Mammary epithelial cell (primary cell): ENCODE measurements at regions of chr1 and their contacts with region 1.

Region 1: DNA sequence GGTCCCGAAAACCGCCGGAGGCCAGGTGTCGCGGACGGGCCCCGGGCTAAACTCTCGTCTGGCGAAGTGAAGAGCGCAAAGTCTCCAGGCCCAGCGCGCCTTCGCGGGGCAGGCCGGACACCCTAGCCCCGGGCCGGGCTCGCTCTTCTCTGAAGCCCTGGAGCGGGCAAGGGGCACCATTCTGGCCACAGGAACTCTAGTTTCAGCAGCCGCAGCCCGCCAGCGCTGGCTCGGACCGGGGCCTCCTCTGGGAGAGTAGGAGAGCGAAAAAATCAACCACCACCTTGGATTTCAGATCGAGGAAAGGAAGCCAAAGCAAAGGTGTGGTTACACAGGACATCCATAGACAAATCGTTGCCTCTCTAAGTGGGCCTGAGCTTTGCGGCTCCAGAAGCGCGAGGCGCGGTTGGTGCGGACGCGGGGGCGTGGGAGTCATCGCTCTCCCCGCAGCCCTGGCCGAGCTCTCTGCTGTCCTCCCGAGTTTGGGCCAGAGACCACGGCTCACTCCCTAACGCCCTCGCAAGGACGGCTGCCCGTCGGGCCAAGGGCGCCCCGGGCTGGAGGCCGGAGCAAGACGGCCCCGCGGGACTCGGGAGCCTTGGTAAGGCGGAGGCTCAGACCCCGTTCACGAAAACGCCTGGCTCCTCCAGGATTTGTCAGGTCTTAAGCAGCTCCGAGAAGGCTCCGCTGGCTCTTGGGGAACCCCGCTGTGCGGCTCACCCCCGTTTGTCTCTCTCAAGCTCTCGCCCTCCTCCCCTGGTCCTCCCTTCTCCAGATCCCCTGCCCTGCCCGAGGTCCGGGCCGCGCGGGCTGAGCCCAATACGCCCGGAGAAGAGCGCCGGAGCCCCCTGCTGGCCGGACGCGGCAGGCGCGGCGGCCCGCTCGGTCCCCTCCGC is 132.9 kb upstream of the DPYD start:
- DNase-seq: peak; percentile 36
- H3K4me3 ChIP-seq: peak overlapping the region; percentile 53 to 67 (median 55)
- H3K27ac ChIP-seq: no peak overlapping the region
- H3K4me1 ChIP-seq: peaks cover 11% of the 10 kb centered on the region
- H3K27me3 ChIP-seq: no peaks in the 10 kb centered on the region
- CTCF ChIP-seq: peak; percentile 54 to 71

Region 2: DNA sequence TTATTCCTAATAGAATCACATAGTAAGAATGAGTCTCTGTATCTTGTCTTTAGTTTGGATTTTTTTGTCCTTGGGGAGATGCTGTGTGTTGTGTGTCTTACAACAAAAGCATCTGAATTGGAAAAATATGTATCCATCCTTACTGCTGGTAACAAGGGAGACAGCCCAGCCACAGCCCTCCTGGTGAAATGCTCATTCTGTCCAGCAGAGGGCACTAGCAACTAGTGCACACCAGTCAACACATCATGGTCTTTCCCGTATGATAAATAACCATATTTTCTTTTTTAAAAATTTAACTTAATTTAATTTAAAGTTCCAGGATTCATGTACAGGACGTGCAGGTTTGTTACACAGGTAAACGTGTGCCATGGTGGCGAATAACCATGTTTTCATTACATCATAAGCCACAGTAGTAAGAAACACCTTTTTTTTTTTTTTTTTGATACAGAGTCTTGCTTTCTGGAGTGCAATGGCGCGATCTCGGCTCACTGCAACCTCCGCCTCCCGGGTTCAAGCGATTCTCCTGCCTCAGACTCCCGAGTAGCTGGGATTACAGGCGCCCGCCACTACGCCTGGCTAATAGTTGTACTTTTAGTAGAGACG is 1087.1 kb before region 1 on chr1:
- CTCF ChIA-PET with region 1: no interaction called
- dilution Hi-C with region 1: no loop called
- in situ Hi-C with region 1: no loop called
- intact Hi-C with region 1: loop called (anchors 1 kb)
- DNase-seq: peak; percentile 60
- H3K4me3 ChIP-seq: peak overlapping the region; percentile 32 to 45 (median 42)
- H3K27ac ChIP-seq: no peak overlapping the region
- H3K4me1 ChIP-seq: no peaks in the 10 kb centered on the region
- H3K27me3 ChIP-seq: peaks cover 3% of the 10 kb centered on the region
- CTCF ChIP-seq: peak; percentile 95 to 97

Region 3: DNA sequence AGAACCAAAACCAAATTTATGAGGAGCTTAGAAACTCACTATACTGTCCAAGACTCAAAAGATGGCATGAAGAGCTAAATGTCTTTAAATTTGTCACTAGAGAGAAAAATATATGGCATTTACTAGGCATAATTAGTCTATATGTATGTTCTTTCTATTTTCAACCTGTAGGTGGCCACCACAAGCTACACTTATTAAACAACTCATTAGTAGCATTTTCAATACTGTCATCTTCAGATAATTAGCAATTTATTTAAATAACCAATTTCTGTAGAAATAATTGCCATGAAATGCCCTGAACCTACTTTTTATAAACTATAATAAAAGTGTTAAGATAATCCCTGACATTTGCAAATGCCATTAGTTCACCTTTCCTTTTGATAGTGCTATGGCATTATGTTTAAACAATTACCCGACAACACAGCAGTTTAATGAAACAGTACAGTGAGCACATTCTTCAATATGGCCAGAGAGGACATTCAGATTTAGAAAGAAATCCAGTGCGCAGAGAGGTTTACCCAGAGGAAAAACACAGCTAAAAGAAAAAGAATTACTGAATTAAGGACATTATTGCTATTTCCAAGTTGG is 809.7 kb before region 1 on chr1:
- CTCF ChIA-PET with region 1: no interaction called
- dilution Hi-C with region 1: no loop called
- in situ Hi-C with region 1: no loop called
- intact Hi-C with region 1: loop called (anchors 5 kb)
- DNase-seq: peak; percentile 5
- H3K4me3 ChIP-seq: no peak overlapping the region
- H3K27ac ChIP-seq: no peak overlapping the region
- H3K4me1 ChIP-seq: no peaks in the 10 kb centered on the region
- H3K27me3 ChIP-seq: no peaks in the 10 kb centered on the region
- CTCF ChIP-seq: peak; percentile 51 to 57

Region 4: GRCh38 chr1:97668945-97669344 is 384.8 kb before region 1 on chr1:
- CTCF ChIA-PET with region 1: no interaction called
- dilution Hi-C with region 1: no loop called
- in situ Hi-C with region 1: no loop called
- intact Hi-C with region 1: loop called (anchors 1 kb)
- DNase-seq: peak; percentile 28
- H3K4me3 ChIP-seq: no peak overlapping the region
- H3K27ac ChIP-seq: no peak overlapping the region
- H3K4me1 ChIP-seq: no peaks in the 10 kb centered on the region
- H3K27me3 ChIP-seq: no peaks in the 10 kb centered on the region
- CTCF ChIP-seq: peak in 1 of 2 donors; percentile 45

Region 5: DNA sequence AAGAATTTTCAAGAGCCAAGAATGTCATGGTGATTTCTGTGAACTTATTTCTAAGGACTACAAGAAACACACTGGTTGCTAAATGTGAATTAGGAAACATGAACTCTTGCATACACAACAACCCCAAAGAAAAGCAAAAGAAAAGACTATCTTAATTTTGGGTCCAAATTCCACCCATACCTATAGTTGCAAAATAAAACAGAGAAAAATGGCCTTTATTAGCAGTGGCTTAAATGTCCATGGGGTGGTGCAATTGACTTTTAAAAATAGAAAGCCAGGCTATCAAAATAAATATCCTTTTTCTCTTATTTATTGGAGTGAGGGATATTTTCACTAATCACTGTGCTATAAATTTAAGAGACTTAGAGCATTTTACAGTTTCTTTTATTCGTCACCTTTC is 52.0 kb before region 1 on chr1:
- CTCF ChIA-PET with region 1: no interaction called
- dilution Hi-C with region 1: no loop called
- in situ Hi-C with region 1: no loop called
- intact Hi-C with region 1: loop called (anchors 1 kb)
- DNase-seq: no peak
- H3K4me3 ChIP-seq: no peak overlapping the region
- H3K27ac ChIP-seq: no peak overlapping the region
- H3K4me1 ChIP-seq: peaks cover 6% of the 10 kb centered on the region
- H3K27me3 ChIP-seq: no peaks in the 10 kb centered on the region
- CTCF ChIP-seq: peak; percentile 8 to 35

Region 6: GRCh38 chr1:98468111-98468717 is 414.5 kb after region 1 on chr1:
- CTCF ChIA-PET with region 1: interaction called, 7 read pairs
- dilution Hi-C with region 1: loop called (anchors 25 kb)
- in situ Hi-C with region 1: loop called in 1 of 2 experiments (anchors 10 kb)
- intact Hi-C with region 1: loop called (anchors 1 kb)
- DNase-seq: peak; percentile 42
- H3K4me3 ChIP-seq: no peak overlapping the region
- H3K27ac ChIP-seq: no peak overlapping the region
- H3K4me1 ChIP-seq: peaks cover 16% of the 10 kb centered on the region
- H3K27me3 ChIP-seq: no peaks in the 10 kb centered on the region
- CTCF ChIP-seq: peak; percentile 89 to 90